Mucosa of descending colon (tissue), 3 donors: ENCODE measurements at regions of chr2 and their contacts with region 1.

Region 1: DNA sequence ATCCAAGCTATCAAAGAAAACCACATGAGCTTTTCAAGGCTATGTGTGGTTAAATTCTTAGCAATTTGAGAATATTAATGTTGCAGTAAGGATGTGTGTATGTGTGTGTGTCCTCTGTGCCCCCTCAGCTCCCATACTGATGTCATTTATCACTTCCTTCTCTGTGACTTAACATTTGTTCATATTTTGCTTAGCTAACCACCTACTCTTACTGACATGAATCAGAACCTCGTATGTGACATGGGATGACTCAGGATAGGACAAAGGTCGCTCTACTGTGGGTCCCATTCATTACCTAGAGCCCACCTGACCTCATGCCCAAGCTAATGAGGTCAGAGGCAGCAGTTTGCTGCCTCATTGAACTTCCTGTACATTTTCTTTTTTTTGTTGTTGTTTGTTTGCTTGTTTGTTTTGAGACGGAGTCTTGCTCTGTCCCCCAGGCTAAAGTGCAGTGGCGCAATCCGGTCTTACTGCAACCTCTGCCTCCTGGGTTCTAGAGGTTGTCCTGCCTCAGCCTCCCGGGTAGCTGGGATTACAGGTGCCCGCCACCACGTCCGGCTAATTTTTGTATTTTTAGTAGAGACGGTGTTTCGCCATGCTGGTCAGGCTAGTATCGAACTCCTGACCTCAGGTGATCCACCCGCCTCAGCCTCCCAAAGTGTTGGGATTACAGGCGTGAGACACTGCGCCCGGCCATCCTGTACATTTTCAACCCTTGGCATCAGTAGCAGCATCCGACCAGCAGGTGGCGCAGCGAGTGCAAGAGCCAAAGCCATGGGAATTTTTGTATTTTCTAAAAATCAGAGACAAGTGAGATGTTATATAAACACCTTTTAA is 36.4 kb downstream of the MOGAT1 start:
- DNase-seq: peak; percentile 81 to 92 (median 88)
- ATAC-seq: peak; percentile 89
- H3K4me3 ChIP-seq: no peak overlapping the region
- H3K4me1 ChIP-seq: peaks cover 12% of the 10 kb centered on the region
- CTCF ChIP-seq: peak; percentile 88

Region 2: DNA sequence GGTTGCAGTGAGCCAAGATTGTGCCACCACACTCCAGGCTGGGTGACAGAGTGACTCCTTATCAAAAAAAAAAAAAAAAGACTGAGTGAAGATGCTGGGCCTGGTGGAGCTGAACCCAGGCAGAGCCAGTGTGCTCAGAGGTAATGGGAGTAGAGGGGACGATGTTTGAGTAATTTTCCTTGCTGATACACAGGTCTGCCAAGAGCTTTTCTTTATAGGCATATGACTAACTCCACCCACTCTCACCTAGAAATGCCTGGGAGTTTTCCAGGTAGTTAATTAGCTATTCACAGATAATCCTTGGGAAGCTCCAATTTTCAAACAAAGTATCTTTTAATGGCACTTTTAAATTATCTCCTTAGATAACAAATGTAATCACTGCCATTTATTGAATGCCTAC is 119.5 kb after region 1 on chr2:
- intact Hi-C with region 1: no loop called
- DNase-seq: no peak
- ATAC-seq: no peak
- H3K4me3 ChIP-seq: no peak overlapping the region
- H3K4me1 ChIP-seq: no peaks in the 10 kb centered on the region
- CTCF ChIP-seq: no peak

Region 3: DNA sequence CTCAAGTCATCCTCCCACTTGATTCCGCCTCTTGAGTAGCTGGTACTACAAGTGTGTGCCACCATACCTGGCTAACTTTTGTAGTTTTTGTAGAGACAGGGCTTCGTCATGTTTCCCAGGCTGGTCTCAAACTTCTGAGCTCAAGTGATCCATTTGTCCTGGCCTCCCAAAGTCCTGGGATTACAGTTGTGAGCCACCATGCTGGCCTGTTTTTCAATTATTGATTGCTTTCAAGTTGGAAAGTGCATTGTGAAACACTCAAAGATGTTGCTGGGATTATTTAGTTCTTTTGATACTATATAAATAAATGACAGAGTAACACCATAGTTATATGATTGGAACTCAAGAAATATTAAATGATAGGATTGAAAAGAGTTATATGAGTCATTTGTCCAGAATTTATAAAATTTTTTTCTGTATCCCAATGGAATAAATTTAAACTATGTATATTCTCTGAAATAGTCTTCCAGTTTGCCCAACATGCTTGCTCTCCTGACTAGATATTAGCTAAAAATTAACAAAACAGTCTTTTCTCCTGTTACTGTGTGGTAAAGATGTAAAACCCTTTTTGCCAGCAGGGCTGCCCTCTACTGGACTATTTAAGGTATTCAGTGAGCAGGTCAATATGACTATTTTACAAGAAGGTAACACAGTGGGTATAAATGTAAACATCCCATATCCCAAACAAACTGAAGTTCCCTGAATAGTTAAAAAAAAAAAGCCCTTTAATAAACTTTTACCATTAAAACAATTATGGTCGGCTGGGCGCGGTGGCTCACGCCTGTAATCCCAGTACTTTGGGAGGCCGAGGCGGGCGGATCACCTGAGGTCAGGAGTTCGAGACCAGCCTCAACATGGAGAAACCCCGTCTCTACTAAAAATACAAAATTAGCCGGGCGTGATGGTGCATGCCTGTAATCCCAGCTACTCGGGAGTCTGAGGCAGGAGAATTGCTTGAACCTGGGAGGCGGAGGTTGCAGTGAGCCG is 195.6 kb after region 1 on chr2:
- intact Hi-C with region 1: loop called (anchors 5 to 10 kb)
- DNase-seq: peak in 1 of 3 donors; percentile 68
- ATAC-seq: peak; percentile 78
- H3K4me3 ChIP-seq: no peak overlapping the region
- H3K4me1 ChIP-seq: no peaks in the 10 kb centered on the region
- CTCF ChIP-seq: no peak